ENCODE measurements at regions of chr7 and their contacts with region 1.

Region 1: GRCh38 chr7:7739204-7740036 is 21.0 kb upstream of the RPA3 start:
- DNase-seq: no peak
- ATAC-seq: peak; percentile 88
- H3K4me3 ChIP-seq: no peak overlapping the region
- H3K27ac ChIP-seq: no peak overlapping the region
- H3K4me1 ChIP-seq: peaks cover 5% of the 10 kb centered on the region; the same call in 1 of the 2 replicates
- H3K27me3 ChIP-seq: no peaks in the 10 kb centered on the region
- CTCF ChIP-seq: no peak
- EP300 ChIP-seq: peak; percentile 62 to 98
- POLR2A ChIP-seq: no peak
- RAD21 ChIP-seq: no peak

Region 2: GRCh38 chr7:7640221-7641128 is 98.9 kb before region 1 on chr7 and contains the start of gene UMAD1:
- CTCF ChIA-PET with region 1: no interaction called
- POLR2A ChIA-PET with region 1: interaction called, 3 read pairs
- RAD21 ChIA-PET with region 1: no interaction called
- SMC1A ChIA-PET with region 1: interaction called, 12 read pairs
- in situ Hi-C with region 1: no loop called
- intact Hi-C with region 1: no loop called
- DNase-seq: peak; percentile 99
- ATAC-seq: peak; percentile 95
- H3K4me3 ChIP-seq: peak within 1 kb of the TSS; percentile 93
- H3K27ac ChIP-seq: peak within 1 kb of the TSS; percentile 79
- H3K4me1 ChIP-seq: no peaks in the 10 kb centered on the region
- H3K27me3 ChIP-seq: no peaks in the 10 kb centered on the region
- CTCF ChIP-seq: no peak
- EP300 ChIP-seq: 0 out of 4 replicates have a peak, but pooled peaks of 1 of the 2 experiments have one; percentile 15
- POLR2A ChIP-seq: peak; percentile 95
- RAD21 ChIP-seq: no peak
- polyA plus RNA-seq, gene UMAD1: 8.7 to 8.8 TPM

Region 3: GRCh38 chr7:7686811-7687508 is 52.5 kb before region 1 on chr7:
- CTCF ChIA-PET with region 1: interaction called, 22 read pairs
- POLR2A ChIA-PET with region 1: no interaction called
- RAD21 ChIA-PET with region 1: interaction called, 39 read pairs
- SMC1A ChIA-PET with region 1: interaction called, 40 read pairs
- in situ Hi-C with region 1: no loop called
- intact Hi-C with region 1: no loop called
- DNase-seq: no peak
- ATAC-seq: no peak
- H3K4me3 ChIP-seq: no peak overlapping the region
- H3K27ac ChIP-seq: no peak overlapping the region
- H3K4me1 ChIP-seq: no peaks in the 10 kb centered on the region; the same call in 1 of the 2 replicates
- H3K27me3 ChIP-seq: no peaks in the 10 kb centered on the region
- CTCF ChIP-seq: no peak
- EP300 ChIP-seq: no peak
- POLR2A ChIP-seq: no peak
- RAD21 ChIP-seq: no peak

Region 4: DNA sequence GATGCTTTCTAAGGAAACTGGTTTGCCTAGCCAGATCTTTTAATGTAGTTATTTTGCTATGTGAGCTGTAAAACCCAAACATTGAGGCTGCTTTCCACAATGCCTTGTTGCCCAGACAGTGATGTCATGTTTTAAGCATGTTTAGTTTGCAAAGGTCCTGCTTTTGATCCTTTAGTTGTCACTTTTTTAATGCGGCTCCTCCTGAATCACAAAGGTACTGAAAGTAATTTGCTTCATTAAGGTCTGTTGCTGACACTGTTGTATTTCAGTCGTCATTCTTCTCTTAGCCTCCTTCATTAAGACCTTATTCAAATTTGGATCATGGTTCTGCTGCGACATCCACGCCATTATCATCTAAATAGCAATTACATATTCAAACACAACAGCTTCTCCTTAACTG is 31.6 kb before region 1 on chr7:
- CTCF ChIA-PET with region 1: interaction called, 6 read pairs
- POLR2A ChIA-PET with region 1: interaction called, 3 read pairs
- RAD21 ChIA-PET with region 1: interaction called, 3 read pairs
- SMC1A ChIA-PET with region 1: interaction called, 13 read pairs
- in situ Hi-C with region 1: no loop called
- intact Hi-C with region 1: no loop called
- DNase-seq: no peak
- ATAC-seq: no peak
- H3K4me3 ChIP-seq: no peak overlapping the region
- H3K27ac ChIP-seq: no peak overlapping the region
- H3K4me1 ChIP-seq: peaks cover 15% of the 10 kb centered on the region; the same call in 1 of the 2 replicates
- H3K27me3 ChIP-seq: no peaks in the 10 kb centered on the region
- CTCF ChIP-seq: no peak
- EP300 ChIP-seq: no peak
- POLR2A ChIP-seq: no peak
- RAD21 ChIP-seq: no peak

Region 5: DNA sequence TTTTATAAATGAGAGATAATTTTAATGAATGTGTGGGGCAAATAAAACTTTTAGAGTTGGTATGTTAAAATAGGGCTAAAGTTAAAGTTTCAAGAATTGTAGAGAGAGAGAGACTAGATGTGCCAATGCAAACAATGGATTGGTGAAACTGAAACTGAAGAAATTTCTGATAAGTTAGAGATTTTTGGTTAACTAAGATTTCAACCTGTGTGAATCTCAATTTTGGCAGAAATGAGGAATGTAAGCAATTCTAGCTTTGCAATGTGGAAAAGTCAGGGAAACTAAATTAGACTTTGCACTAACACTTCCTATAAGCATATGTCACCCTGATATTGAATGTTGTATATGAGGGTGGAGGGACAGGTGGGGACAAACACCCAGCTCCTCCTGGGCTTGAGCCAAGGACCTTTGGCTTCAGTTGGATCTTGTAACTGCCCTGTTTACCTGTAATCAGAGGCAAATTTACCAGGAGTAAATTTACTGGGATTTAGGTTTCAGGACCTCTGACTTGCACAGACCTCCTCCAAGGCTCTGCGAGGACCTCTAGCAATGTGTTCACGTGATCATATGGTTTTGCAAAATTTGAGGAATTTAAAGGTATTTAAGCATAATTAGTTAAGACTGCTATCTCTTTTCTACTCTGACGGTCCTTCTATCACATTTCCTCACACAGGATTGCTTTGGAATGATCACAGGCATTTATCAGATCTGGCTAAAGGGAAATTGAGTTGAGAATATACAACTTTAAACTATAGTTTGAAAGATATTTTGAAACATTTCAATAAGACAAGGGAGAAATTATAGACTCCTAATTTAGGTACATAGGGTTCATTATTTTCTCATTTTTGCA is 12.0 kb after region 1 on chr7:
- CTCF ChIA-PET with region 1: interaction called, 9 read pairs
- POLR2A ChIA-PET with region 1: interaction called, 3 read pairs
- RAD21 ChIA-PET with region 1: no interaction called
- SMC1A ChIA-PET with region 1: interaction called, 25 read pairs
- in situ Hi-C with region 1: no loop called
- intact Hi-C with region 1: no loop called
- DNase-seq: no peak
- ATAC-seq: peak; percentile 34; the same call in 1 of the 3 replicates
- H3K4me3 ChIP-seq: no peak overlapping the region
- H3K27ac ChIP-seq: no peak overlapping the region
- H3K4me1 ChIP-seq: no peaks in the 10 kb centered on the region
- H3K27me3 ChIP-seq: no peaks in the 10 kb centered on the region
- CTCF ChIP-seq: no peak
- EP300 ChIP-seq: no peak
- POLR2A ChIP-seq: no peak
- RAD21 ChIP-seq: no peak

Region 6: GRCh38 chr7:7848246-7848645 is 108.8 kb after region 1 on chr7:
- CTCF ChIA-PET with region 1: no interaction called
- POLR2A ChIA-PET with region 1: no interaction called
- RAD21 ChIA-PET with region 1: no interaction called
- SMC1A ChIA-PET with region 1: no interaction called
- in situ Hi-C with region 1: no loop called
- intact Hi-C with region 1: no loop called
- DNase-seq: no peak
- ATAC-seq: peak; percentile 82
- H3K4me3 ChIP-seq: no peak overlapping the region
- H3K27ac ChIP-seq: no peak overlapping the region
- H3K4me1 ChIP-seq: no peaks in the 10 kb centered on the region
- H3K27me3 ChIP-seq: no peaks in the 10 kb centered on the region
- CTCF ChIP-seq: no peak
- EP300 ChIP-seq: no peak
- POLR2A ChIP-seq: no peak
- RAD21 ChIP-seq: no peak

Measured in GM12878 (cell line).